ENCODE measurements at regions of chr4 and their contacts with region 1.

Region 1: DNA sequence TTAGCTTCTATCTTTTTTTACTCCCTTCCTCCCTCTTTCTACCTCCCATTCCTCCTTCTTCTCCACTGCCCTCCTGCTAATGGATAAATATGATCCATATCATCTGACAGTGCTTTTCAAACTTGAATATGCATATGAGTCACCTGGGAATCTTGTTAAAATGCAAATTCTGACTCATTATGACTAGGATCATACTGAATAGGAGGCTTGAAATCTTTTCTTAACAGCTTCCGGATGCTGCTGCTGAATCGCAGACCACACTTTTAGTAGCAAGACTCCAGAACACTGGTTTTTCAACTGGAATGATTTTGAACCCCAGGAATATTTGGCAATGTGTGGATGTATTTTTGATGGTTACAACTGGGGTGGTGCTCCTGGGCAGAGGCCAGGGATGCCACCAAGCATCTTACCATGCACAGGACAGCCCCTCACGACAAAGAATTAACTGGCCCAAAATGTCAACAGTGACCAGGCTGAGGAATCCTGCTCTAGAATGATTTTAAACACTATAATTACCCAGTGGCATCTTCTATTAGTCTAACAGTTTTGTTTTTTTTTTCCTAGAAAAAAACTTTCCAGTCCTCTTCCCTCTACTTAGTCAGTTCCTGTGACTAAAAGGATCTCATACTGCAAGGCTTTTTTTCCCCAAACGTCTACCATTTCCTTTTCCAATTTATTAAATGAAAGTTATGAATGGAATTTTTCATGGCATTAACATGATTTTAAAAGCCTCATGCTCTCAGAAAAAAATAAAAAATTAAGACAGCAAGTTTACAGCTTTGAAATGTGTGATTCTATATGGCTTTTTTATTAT is 10.6 kb upstream of the PYURF start:
- DNase-seq: no peak
- ATAC-seq: no peak
- H3K4me3 ChIP-seq: no peak overlapping the region
- H3K4me3 Mint-ChIP-seq: no peak overlapping the region
- H3K27ac ChIP-seq: no peak overlapping the region
- H3K27ac Mint-ChIP-seq: no peak overlapping the region
- H3K4me1 ChIP-seq: peaks cover 2% of the 10 kb centered on the region
- H3K4me1 Mint-ChIP-seq: peaks cover under 1% of the 10 kb centered on the region
- H3K27me3 ChIP-seq: no peaks in the 10 kb centered on the region
- H3K27me3 Mint-ChIP-seq: no peaks in the 10 kb centered on the region
- CTCF ChIP-seq: no peak

Region 2: GRCh38 chr4:87758270-87758669 is 775.9 kb before region 1 on chr4:
- CTCF ChIA-PET with region 1: no interaction called
- POLR2A ChIA-PET with region 1: no interaction called
- intact Hi-C with region 1: no loop called
- DNase-seq: no peak
- ATAC-seq: no peak
- H3K4me3 ChIP-seq: no peak overlapping the region
- H3K4me3 Mint-ChIP-seq: no peak overlapping the region
- H3K27ac ChIP-seq: no peak overlapping the region
- H3K27ac Mint-ChIP-seq: no peak overlapping the region
- H3K4me1 ChIP-seq: no peaks in the 10 kb centered on the region
- H3K4me1 Mint-ChIP-seq: no peaks in the 10 kb centered on the region
- H3K27me3 ChIP-seq: no peaks in the 10 kb centered on the region
- H3K27me3 Mint-ChIP-seq: peaks cover 18% of the 10 kb centered on the region
- CTCF ChIP-seq: no peak

Region 3: DNA sequence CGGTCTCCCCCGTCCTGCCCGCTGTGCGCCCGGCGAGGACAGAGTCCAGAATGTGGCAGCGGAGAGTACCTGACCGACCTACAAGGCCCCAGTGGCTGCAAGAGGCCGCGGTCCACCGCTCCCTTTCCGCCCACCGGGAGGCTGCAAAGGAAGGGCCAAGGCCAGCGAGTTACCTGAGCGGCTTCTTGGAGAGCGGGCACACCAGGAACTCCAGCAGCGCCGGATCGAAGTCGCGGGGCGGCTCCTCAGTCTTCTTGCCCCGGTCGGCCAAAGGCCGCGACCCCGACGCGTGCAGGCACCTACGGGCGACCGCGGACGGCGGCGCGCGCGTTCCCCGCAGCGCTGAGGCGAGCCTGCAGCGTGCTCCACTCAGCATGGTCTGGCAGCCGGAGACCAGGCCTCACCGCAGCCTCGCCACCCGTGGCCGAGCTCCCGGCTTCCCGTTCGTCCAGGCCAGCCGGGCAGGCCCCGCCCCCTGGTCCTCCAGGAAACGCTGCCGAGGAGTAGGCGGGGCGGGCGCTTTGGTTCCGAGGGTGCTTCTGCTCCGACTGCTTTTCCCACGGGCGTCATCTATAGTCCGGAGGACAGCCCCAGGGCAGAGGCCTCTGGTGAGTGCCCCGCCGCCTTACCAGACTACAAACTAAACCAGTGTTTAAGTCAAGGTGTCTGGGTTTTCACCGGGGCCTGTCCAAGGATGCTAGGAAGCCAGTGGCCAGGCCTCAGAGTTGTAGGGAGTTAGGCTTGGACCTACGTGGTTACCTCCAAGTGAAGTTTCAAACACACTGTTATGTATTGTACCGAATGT is 10.6 kb before region 1 on chr4 and contains the start of gene PYURF:
- CTCF ChIA-PET with region 1: interaction called, 18 read pairs
- POLR2A ChIA-PET with region 1: no interaction called
- intact Hi-C with region 1: no loop called
- DNase-seq: peak; percentile 36 to 88 (median 69)
- ATAC-seq: peak; percentile 67
- H3K4me3 ChIP-seq: peak within 1 kb of the TSS; percentile 82
- H3K4me3 Mint-ChIP-seq: peak within 1 kb of the TSS; percentile 97
- H3K27ac ChIP-seq: peak within 1 kb of the TSS; percentile 42 to 59
- H3K27ac Mint-ChIP-seq: peak within 1 kb of the TSS; percentile 88
- H3K4me1 ChIP-seq: peaks cover 20% of the 10 kb centered on the region
- H3K4me1 Mint-ChIP-seq: peaks cover 58% of the 10 kb centered on the region
- H3K27me3 ChIP-seq: no peaks in the 10 kb centered on the region
- H3K27me3 Mint-ChIP-seq: no peaks in the 10 kb centered on the region
- CTCF ChIP-seq: no peak
- total RNA-seq, gene PYURF: 25.3 to 26.8 TPM

Region 4: GRCh38 chr4:88591787-88592599 is 57.8 kb after region 1 on chr4 and contains the start of gene HERC3:
- CTCF ChIA-PET with region 1: interaction called, 12 read pairs
- POLR2A ChIA-PET with region 1: interaction called, 3 read pairs
- intact Hi-C with region 1: loop called (anchors 5 kb)
- DNase-seq: peak; percentile 76 to 95 (median 86)
- ATAC-seq: peak; percentile 84
- H3K4me3 ChIP-seq: peak within 1 kb of the TSS; percentile 96
- H3K4me3 Mint-ChIP-seq: peak within 1 kb of the TSS; percentile 100
- H3K27ac ChIP-seq: peak within 1 kb of the TSS; percentile 83 to 93
- H3K27ac Mint-ChIP-seq: peak within 1 kb of the TSS; percentile 99
- H3K4me1 ChIP-seq: peaks cover 23% of the 10 kb centered on the region
- H3K4me1 Mint-ChIP-seq: peaks cover 60% of the 10 kb centered on the region
- H3K27me3 ChIP-seq: no peaks in the 10 kb centered on the region
- H3K27me3 Mint-ChIP-seq: no peaks in the 10 kb centered on the region
- CTCF ChIP-seq: no peak
- total RNA-seq, gene HERC3: 63.1 to 66.4 TPM

Region 5: GRCh38 chr4:88613417-88613875 is 79.3 kb after region 1 on chr4:
- CTCF ChIA-PET with region 1: interaction called, 17 read pairs
- POLR2A ChIA-PET with region 1: interaction called, 3 read pairs
- intact Hi-C with region 1: no loop called
- DNase-seq: peak in 12 of 14 experiments; percentile 20 to 90 (median 40)
- ATAC-seq: peak; percentile 95
- H3K4me3 ChIP-seq: peak overlapping the region; percentile 30
- H3K4me3 Mint-ChIP-seq: peak overlapping the region; percentile 80
- H3K27ac ChIP-seq: peak overlapping the region; percentile 80 to 87
- H3K27ac Mint-ChIP-seq: peak overlapping the region; percentile 95
- H3K4me1 ChIP-seq: peaks cover 44% of the 10 kb centered on the region
- H3K4me1 Mint-ChIP-seq: peaks cover 86% of the 10 kb centered on the region
- H3K27me3 ChIP-seq: no peaks in the 10 kb centered on the region
- H3K27me3 Mint-ChIP-seq: no peaks in the 10 kb centered on the region
- CTCF ChIP-seq: no peak

Region 6: GRCh38 chr4:88653371-88653946 is 119.3 kb after region 1 on chr4:
- CTCF ChIA-PET with region 1: interaction called, 12 read pairs
- POLR2A ChIA-PET with region 1: no interaction called
- intact Hi-C with region 1: no loop called
- DNase-seq: no peak
- ATAC-seq: no peak
- H3K4me3 ChIP-seq: no peak overlapping the region
- H3K4me3 Mint-ChIP-seq: no peak overlapping the region
- H3K27ac ChIP-seq: no peak overlapping the region
- H3K27ac Mint-ChIP-seq: peak overlapping the region; percentile 57
- H3K4me1 ChIP-seq: no peaks in the 10 kb centered on the region
- H3K4me1 Mint-ChIP-seq: peaks cover 74% of the 10 kb centered on the region
- H3K27me3 ChIP-seq: no peaks in the 10 kb centered on the region
- H3K27me3 Mint-ChIP-seq: no peaks in the 10 kb centered on the region
- CTCF ChIP-seq: no peak

Region 7: GRCh38 chr4:88792268-88792781 is 258.2 kb after region 1 on chr4:
- CTCF ChIA-PET with region 1: interaction called, 3 read pairs
- POLR2A ChIA-PET with region 1: no interaction called
- intact Hi-C with region 1: loop called (anchors 10 kb)
- DNase-seq: peak in 2 of 14 experiments; percentile 9 to 33
- ATAC-seq: no peak
- H3K4me3 ChIP-seq: no peak overlapping the region
- H3K4me3 Mint-ChIP-seq: no peak overlapping the region
- H3K27ac ChIP-seq: no peak overlapping the region
- H3K27ac Mint-ChIP-seq: no peak overlapping the region
- H3K4me1 ChIP-seq: no peaks in the 10 kb centered on the region
- H3K4me1 Mint-ChIP-seq: no peaks in the 10 kb centered on the region
- H3K27me3 ChIP-seq: no peaks in the 10 kb centered on the region
- H3K27me3 Mint-ChIP-seq: no peaks in the 10 kb centered on the region
- CTCF ChIP-seq: no peak